ENCODE measurements at regions of chr12 and their contacts with region 1.

Region 1: GRCh38 chr12:26906704-26907103 is 31.1 kb downstream of the INTS13 start:
- DNase-seq: no peak
- ATAC-seq: no peak
- H3K4me3 ChIP-seq: no peak overlapping the region
- H3K4me3 Mint-ChIP-seq: no peak overlapping the region
- H3K27ac ChIP-seq: no peak overlapping the region
- H3K27ac Mint-ChIP-seq: peak overlapping the region in 4 of 9 donors; percentile 1 to 48 (median 22)
- H3K4me1 ChIP-seq: no peaks in the 10 kb centered on the region
- H3K4me1 Mint-ChIP-seq: peaks cover 0 to 14% (median 7%) of the 10 kb centered on the region in 7 donors
- H3K27me3 ChIP-seq: no peaks in the 10 kb centered on the region
- H3K27me3 Mint-ChIP-seq: no peaks in the 10 kb centered on the region

Region 2: DNA sequence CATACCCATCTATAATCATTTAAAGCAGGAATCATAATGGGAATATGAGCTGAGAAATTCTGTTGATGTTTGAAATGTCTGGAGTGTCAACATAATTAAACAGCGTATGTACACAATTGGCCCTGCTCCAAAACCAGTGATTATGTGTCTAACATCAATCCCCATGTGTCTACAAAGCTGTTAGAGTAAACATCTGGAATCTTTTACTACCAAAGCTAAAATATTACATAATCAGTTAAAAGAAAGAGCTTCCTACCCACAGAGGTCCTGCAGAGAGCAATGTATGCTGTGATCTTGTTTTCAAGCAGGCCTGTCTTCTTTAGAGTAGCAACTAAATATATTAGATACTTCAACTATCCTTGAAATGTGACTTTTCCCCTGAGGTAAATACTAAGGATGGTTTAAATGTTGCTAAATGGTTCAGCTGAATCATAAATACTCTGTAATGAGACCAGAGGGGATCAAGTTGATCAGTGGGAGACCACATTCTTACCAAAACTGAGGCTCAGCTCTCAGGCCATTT is 873.9 kb before region 1 on chr12:
- CTCF ChIA-PET with region 1: no interaction called
- POLR2A ChIA-PET with region 1: no interaction called
- intact Hi-C with region 1: no loop called
- DNase-seq: no peak
- ATAC-seq: no peak
- H3K4me3 ChIP-seq: no peak overlapping the region
- H3K4me3 Mint-ChIP-seq: no peak overlapping the region
- H3K27ac ChIP-seq: no peak overlapping the region
- H3K27ac Mint-ChIP-seq: no peak overlapping the region
- H3K4me1 ChIP-seq: no peaks in the 10 kb centered on the region
- H3K4me1 Mint-ChIP-seq: peaks cover 0 to under 1% (median 0%) of the 10 kb centered on the region in 7 donors
- H3K27me3 ChIP-seq: no peaks in the 10 kb centered on the region
- H3K27me3 Mint-ChIP-seq: peaks cover 0 to 18% (median 0%) of the 10 kb centered on the region in 5 donors

Region 3: DNA sequence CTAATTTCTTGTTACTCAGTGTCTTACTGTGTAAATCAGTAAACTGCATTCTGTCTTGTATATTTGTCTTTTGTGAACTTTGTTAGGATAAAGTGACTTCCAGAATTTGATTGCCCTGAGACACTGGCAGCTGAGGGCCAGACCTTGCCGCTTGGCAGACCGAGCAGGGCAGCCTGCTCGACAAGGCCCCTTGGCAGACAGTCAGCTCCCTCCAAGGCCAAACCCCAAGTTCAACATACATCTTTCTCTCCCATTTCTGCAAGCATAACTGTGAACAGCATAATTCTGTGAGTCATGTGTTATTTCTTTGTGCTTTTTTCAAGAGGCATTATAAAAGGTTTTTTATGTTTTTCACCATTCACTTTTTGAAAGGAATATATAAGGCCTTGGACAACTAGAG is 386.8 kb after region 1 on chr12:
- CTCF ChIA-PET with region 1: interaction called, 10 read pairs
- POLR2A ChIA-PET with region 1: no interaction called
- intact Hi-C with region 1: no loop called
- DNase-seq: no peak
- ATAC-seq: no peak
- H3K4me3 ChIP-seq: no peak overlapping the region
- H3K4me3 Mint-ChIP-seq: no peak overlapping the region
- H3K27ac ChIP-seq: no peak overlapping the region
- H3K27ac Mint-ChIP-seq: peak overlapping the region in 1 of 9 donors; percentile 37
- H3K4me1 ChIP-seq: no peaks in the 10 kb centered on the region
- H3K4me1 Mint-ChIP-seq: peaks cover 2 to 17% (median 7%) of the 10 kb centered on the region in 7 donors
- H3K27me3 ChIP-seq: no peaks in the 10 kb centered on the region
- H3K27me3 Mint-ChIP-seq: no peaks in the 10 kb centered on the region

Measured in naive thymus-derived CD4-positive, alpha-beta T cell (primary cell).